ENCODE measurements at regions of chr4 and their contacts with region 1.

Region 1: GRCh38 chr4:110049951-110050925 is 137.6 kb downstream of the EGF start:
- DNase-seq: no peak

Region 2: GRCh38 chr4:110193822-110194761 is 143.9 kb after region 1 on chr4:
- intact Hi-C with region 1: loop called (anchors 5 kb)
- DNase-seq: no peak

Region 3: DNA sequence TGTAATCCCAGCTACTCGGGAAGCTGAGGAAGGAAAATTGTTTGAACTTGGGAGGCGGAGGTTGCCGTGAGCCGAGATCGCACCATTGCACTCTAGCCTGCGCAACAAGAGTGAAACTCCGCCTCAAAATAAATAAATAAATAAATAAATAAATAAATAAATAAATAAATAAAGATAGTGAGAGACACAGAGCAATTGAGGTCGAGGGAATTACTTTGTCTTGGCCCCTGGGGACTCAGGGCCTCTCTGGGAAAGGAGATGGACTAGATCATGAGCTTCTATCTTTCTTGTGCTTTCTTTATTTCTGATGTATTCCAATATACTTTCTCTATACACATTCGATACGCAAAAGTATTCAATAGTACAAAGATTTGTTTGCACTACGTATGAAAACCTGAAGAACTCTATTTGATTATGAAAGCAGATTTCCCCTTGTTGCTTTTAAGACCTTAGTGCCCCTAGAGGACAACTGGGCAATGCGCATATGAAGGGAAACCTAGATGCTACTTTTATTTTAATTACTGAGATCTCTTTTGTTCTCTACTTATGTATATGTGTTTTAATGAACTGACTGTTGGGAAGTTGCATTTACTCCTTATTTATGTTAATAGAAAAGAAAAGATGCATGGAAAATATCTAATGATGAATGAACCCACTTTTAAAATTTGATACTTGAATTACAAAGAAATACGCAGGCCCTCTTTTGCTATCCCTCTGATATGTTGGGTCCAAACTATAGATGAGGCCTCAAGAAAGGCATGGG is 160.9 kb after region 1 on chr4:
- intact Hi-C with region 1: loop called (anchors 1 kb)
- DNase-seq: no peak